CD14-positive monocyte (primary cell): ENCODE measurements at regions of chr10 and their contacts with region 1.

Region 1: GRCh38 chr10:73879296-73880173 is 5.2 kb upstream of the CAMK2G start:
- DNase-seq: peak; percentile 91 to 97 (median 97)
- H3K4me3 ChIP-seq: no peak overlapping the region
- H3K4me3 Mint-ChIP-seq: no peak overlapping the region
- H3K27ac ChIP-seq: peak overlapping the region in 1 of 2 donors; percentile 64
- H3K27ac Mint-ChIP-seq: peak overlapping the region; percentile 55 to 90 (median 85)
- H3K4me1 ChIP-seq: peaks cover 19 to 26% of the 10 kb centered on the region in 2 donors
- H3K4me1 Mint-ChIP-seq: peaks cover 25% of the 10 kb centered on the region
- H3K27me3 ChIP-seq: no peaks in the 10 kb centered on the region
- H3K27me3 Mint-ChIP-seq: peaks cover 0 to 1% (median 0%) of the 10 kb centered on the region in 3 donors
- CTCF ChIP-seq: peak; percentile 86

Region 2: DNA sequence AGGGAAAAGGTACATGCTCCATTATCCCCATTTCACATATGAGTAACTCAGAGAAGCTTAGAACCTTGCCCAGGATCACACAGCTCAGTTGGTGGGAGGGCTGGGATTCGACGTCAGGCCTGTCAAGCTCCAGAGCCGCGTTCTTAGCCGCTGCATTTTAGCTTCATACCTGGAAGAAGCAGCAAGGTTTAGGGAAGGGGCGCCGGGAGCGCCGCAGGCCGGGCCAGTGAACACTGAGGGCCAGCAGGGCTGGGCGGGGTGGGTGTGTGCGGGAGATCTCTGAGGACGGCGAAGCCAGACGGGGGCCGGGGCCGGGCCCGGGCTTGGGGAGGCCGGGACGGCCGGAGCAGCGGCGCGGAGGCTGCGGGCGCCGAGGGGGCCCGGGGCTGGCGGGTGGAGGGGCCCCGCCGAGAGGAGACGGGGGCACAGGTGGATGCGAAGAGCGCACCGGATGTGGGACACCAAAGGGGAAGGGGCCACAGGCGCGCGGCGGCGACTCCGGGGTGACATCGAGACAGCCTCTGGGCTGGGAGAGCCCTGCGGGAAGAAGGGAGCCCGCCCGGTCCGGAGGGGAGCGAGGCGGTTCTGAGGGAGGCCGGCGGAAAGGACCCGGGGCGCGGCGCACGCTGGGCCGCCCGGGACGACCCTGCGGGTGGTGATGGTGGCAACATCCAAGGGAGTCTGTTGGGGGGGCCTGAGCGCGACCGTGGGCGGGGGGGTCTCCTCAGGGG is 68.6 kb before region 1 on chr10:
- intact Hi-C with region 1: loop called in 1 of 2 experiments (anchors 5 kb)
- DNase-seq: peak in 2 of 3 donors; percentile 16 to 40
- H3K4me3 ChIP-seq: peak overlapping the region; percentile 69 to 93 (median 72)
- H3K4me3 Mint-ChIP-seq: peak overlapping the region; percentile 90 to 94
- H3K27ac ChIP-seq: peak overlapping the region; percentile 81 to 91
- H3K27ac Mint-ChIP-seq: peak overlapping the region; percentile 92 to 97 (median 93)
- H3K4me1 ChIP-seq: peaks cover 27 to 31% of the 10 kb centered on the region in 2 donors
- H3K4me1 Mint-ChIP-seq: peaks cover 39% of the 10 kb centered on the region
- H3K27me3 ChIP-seq: no peaks in the 10 kb centered on the region
- H3K27me3 Mint-ChIP-seq: no peaks in the 10 kb centered on the region
- CTCF ChIP-seq: no peak

Region 3: GRCh38 chr10:73827346-73828089 is 52.0 kb before region 1 on chr10:
- intact Hi-C with region 1: no loop called
- DNase-seq: no peak
- H3K4me3 ChIP-seq: no peak overlapping the region
- H3K4me3 Mint-ChIP-seq: no peak overlapping the region
- H3K27ac ChIP-seq: peak overlapping the region in 1 of 2 donors; percentile 3
- H3K27ac Mint-ChIP-seq: peak overlapping the region in 3 of 7 donors; percentile 40 to 86 (median 58)
- H3K4me1 ChIP-seq: no peaks in the 10 kb centered on the region
- H3K4me1 Mint-ChIP-seq: peaks cover under 1% of the 10 kb centered on the region
- H3K27me3 ChIP-seq: no peaks in the 10 kb centered on the region
- H3K27me3 Mint-ChIP-seq: peaks cover 0 to 1% (median 0%) of the 10 kb centered on the region in 3 donors
- CTCF ChIP-seq: no peak

Region 4: DNA sequence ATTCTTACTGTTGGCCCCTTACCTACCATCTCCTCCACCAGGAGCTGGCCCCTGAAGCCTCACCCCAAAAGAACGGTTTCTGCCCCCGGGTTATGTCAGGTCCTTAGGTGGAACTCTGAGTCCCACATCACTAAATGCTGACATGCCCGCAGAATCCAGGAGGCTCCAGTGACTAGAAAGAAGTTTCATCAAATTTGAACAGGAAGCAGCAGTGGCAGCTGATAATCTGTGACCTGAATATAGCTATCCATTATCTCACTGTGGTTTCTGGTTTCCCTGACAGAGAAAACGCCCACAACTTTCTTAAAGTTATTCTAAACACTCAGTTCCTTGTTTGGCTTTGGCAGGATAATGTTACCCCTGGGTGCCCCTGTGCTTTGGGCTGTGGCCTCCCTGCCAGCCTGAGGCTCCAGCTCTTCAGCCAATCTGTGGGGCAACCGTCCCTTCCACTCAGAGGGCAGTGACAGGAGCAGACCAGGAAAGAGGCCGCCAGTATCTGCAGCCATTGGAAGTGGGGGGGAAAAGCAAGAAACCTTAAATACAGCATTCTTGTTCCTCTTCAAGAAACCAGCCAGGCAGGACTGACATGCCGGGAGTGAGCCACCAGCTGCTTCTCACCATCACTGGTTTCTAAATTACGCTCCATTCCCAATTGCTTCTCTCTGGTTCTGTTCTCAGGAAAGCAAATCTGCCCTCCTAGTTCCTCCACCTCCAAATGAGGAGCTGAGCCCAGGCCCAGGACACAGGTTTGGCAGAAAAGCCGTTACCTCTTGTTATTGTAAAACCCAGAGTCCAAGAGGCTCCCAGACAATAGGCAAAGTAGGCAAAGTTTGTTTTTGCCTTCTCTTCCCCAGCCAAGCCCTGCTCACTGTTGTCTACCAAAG is 77.2 kb after region 1 on chr10:
- intact Hi-C with region 1: no loop called
- DNase-seq: peak; percentile 38 to 63 (median 46)
- H3K4me3 ChIP-seq: peak overlapping the region in 1 of 3 experiments; percentile 59
- H3K4me3 Mint-ChIP-seq: peak overlapping the region; percentile 67 to 86
- H3K27ac ChIP-seq: peak overlapping the region; percentile 77 to 82
- H3K27ac Mint-ChIP-seq: peak overlapping the region; percentile 89 to 97 (median 95)
- H3K4me1 ChIP-seq: peaks cover 56 to 68% of the 10 kb centered on the region in 2 donors
- H3K4me1 Mint-ChIP-seq: peaks cover 62% of the 10 kb centered on the region
- H3K27me3 ChIP-seq: no peaks in the 10 kb centered on the region
- H3K27me3 Mint-ChIP-seq: no peaks in the 10 kb centered on the region
- CTCF ChIP-seq: no peak